Calu3 (cell line): ENCODE measurements at regions of chr14 and their contacts with region 1.

Region 1: DNA sequence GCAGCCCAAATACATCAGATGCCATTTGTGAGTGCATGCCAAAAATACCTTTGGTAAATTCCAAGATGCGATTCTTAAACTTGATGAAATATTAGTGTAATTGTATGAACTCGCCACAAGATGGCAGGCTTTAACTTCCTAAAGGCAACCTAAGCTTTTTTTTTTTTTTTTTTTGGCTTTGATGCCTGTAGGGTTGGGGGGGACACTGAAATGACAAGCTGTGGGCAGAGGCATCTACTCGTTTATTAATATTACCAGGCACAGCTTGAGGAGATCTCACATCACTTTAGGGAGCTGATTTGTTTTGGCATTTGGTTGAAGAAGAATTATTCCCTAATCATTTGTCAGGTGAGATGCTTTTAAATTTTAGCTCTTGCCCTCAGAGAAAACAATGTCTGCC is 126.7 kb upstream of the CCDC196 start:
- DNase-seq: peak; percentile 39
- H3K4me3 Mint-ChIP-seq: no peak overlapping the region
- H3K27ac Mint-ChIP-seq: no peak overlapping the region
- H3K4me1 Mint-ChIP-seq: peaks cover 17% of the 10 kb centered on the region
- H3K27me3 Mint-ChIP-seq: peaks cover 11% of the 10 kb centered on the region
- CTCF ChIP-seq: peak; percentile 46

Region 2: GRCh38 chr14:66378712-66379505 is 19.4 kb after region 1 on chr14:
- CTCF ChIA-PET with region 1: interaction called, 11 read pairs
- intact Hi-C with region 1: no loop called
- DNase-seq: peak; percentile 88
- H3K4me3 Mint-ChIP-seq: no peak overlapping the region
- H3K27ac Mint-ChIP-seq: no peak overlapping the region
- H3K4me1 Mint-ChIP-seq: peaks cover 19% of the 10 kb centered on the region
- H3K27me3 Mint-ChIP-seq: no peaks in the 10 kb centered on the region
- CTCF ChIP-seq: no peak

Region 3: GRCh38 chr14:66395300-66395699 is 35.8 kb after region 1 on chr14:
- CTCF ChIA-PET with region 1: interaction called, 5 read pairs
- intact Hi-C with region 1: loop called (anchors 1 kb)
- DNase-seq: peak; percentile 16
- H3K4me3 Mint-ChIP-seq: no peak overlapping the region
- H3K27ac Mint-ChIP-seq: no peak overlapping the region
- H3K4me1 Mint-ChIP-seq: no peaks in the 10 kb centered on the region
- H3K27me3 Mint-ChIP-seq: peaks cover 14% of the 10 kb centered on the region
- CTCF ChIP-seq: no peak

Region 4: GRCh38 chr14:66403183-66403582 is 43.7 kb after region 1 on chr14:
- CTCF ChIA-PET with region 1: interaction called, 61 read pairs
- intact Hi-C with region 1: loop called (anchors 1 kb)
- DNase-seq: no peak
- H3K4me3 Mint-ChIP-seq: no peak overlapping the region
- H3K27ac Mint-ChIP-seq: no peak overlapping the region
- H3K4me1 Mint-ChIP-seq: peaks cover 9% of the 10 kb centered on the region
- H3K27me3 Mint-ChIP-seq: no peaks in the 10 kb centered on the region
- CTCF ChIP-seq: peak; percentile 45

Region 5: GRCh38 chr14:66476964-66477363 is 117.5 kb after region 1 on chr14:
- CTCF ChIA-PET with region 1: no interaction called
- intact Hi-C with region 1: loop called (anchors 5 kb)
- DNase-seq: no peak
- H3K4me3 Mint-ChIP-seq: no peak overlapping the region
- H3K27ac Mint-ChIP-seq: no peak overlapping the region
- H3K4me1 Mint-ChIP-seq: no peaks in the 10 kb centered on the region
- H3K27me3 Mint-ChIP-seq: no peaks in the 10 kb centered on the region
- CTCF ChIP-seq: no peak

Region 6: DNA sequence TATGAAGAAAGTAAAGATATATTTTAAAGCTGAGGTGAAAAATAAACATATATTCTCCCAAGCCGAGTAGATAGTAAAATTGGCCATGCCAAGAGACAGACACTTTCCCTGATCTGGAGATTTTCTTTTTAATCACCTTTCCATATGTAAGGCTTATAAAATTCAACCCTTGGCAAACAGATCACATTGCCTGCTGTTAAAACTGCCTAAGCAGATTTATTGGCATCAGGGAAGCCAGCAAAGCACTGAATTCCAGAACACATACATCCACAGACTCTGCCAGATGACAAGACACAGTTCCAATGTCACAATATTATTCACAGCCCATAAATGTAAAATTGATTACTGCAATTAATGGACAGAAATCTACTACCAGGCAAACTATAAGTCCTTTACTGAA is 751.5 kb after region 1 on chr14:
- CTCF ChIA-PET with region 1: no interaction called
- intact Hi-C with region 1: loop called (anchors 10 kb)
- DNase-seq: no peak
- H3K4me3 Mint-ChIP-seq: no peak overlapping the region
- H3K27ac Mint-ChIP-seq: no peak overlapping the region
- H3K4me1 Mint-ChIP-seq: no peaks in the 10 kb centered on the region
- H3K27me3 Mint-ChIP-seq: no peaks in the 10 kb centered on the region
- CTCF ChIP-seq: no peak